ENCODE measurements at regions of chr20 and their contacts with region 1.

Region 1: DNA sequence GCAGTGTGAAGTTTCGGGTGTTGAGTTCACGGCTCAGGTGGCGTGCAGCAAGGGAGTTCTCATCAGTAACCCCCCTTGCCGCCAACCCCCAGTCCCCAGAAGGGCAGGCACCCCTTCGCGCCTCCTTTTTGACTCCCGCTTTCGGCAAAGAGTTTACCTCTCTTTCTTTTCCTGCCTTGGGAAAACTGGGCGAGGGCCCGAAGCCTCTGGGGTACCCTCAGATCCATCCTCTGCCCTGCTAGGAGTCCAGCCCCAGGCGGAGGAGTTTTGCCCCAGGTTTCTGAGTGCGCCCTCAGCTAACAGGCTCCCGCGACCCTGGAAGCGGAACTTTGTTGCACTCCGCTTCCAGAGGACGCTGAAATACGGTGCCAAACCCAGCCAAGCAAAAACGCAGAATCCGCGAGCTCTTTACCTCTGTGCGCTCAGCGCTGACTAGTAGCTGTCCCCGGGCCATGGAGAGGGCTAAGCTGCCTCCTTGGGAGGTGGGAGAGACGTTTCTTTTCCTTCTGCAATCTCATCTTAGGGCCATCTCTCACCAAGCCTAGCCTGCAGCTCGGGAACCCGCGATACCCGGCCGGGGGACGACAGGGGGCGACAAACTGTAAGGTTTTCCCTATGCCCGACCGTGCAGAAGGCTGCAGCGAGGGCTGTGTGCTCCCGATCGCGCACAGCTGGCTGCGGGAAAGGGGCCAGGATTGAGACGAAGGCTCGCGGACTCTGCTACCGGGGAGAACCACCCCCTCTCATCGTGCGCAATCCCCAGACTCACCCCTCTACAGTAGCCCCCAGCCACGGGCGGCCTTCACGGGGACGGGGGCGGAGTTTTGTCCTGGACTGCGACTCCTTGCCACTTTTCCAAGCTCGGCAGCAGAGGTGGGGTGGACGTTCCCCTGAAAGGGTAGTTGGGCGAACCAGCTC is 2.7 kb upstream of the PAX1 start:
- DNase-seq: no peak
- H3K4me3 Mint-ChIP-seq: no peak overlapping the region
- H3K27ac Mint-ChIP-seq: no peak overlapping the region
- H3K4me1 Mint-ChIP-seq: peaks cover 8% of the 10 kb centered on the region
- H3K27me3 Mint-ChIP-seq: peaks cover 81% of the 10 kb centered on the region

Region 2: GRCh38 chr20:21513881-21514540 is 188.8 kb before region 1 on chr20 and contains the start of gene NKX2-2:
- intact Hi-C with region 1: loop called (anchors 2 kb)
- DNase-seq: no peak
- H3K4me3 Mint-ChIP-seq: no peak within 1 kb of the TSS
- H3K27ac Mint-ChIP-seq: peak within 1 kb of the TSS; percentile 61
- H3K4me1 Mint-ChIP-seq: peaks cover 8% of the 10 kb centered on the region
- H3K27me3 Mint-ChIP-seq: peaks cover 69% of the 10 kb centered on the region
- total RNA-seq, gene NKX2-2: not detected in 2 replicates

Region 3: DNA sequence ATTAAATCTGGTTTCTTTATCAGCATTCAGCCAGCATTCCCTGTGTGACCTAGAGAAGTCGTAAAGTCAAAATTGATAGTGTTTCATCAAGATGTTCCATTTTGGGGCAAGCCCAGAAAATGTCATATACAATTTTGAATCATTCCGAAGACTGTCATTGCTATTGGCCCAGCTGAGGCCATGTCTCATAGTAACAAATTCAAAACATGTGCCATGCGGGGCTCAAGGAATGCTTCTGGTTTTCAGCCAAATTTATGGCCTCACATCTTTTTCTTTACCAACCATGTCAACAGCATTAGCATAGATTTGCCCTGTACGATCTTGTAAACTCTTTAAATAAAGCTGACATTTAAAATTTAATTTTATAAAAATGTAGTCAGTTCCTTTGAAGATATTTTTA is 317.4 kb after region 1 on chr20:
- intact Hi-C with region 1: no loop called
- DNase-seq: no peak
- H3K4me3 Mint-ChIP-seq: no peak overlapping the region
- H3K27ac Mint-ChIP-seq: no peak overlapping the region
- H3K4me1 Mint-ChIP-seq: no peaks in the 10 kb centered on the region
- H3K27me3 Mint-ChIP-seq: no peaks in the 10 kb centered on the region

Region 4: GRCh38 chr20:22567944-22568871 is 865.4 kb after region 1 on chr20:
- intact Hi-C with region 1: loop called (anchors 5 kb)
- DNase-seq: no peak
- H3K4me3 Mint-ChIP-seq: no peak overlapping the region
- H3K27ac Mint-ChIP-seq: no peak overlapping the region
- H3K4me1 Mint-ChIP-seq: no peaks in the 10 kb centered on the region
- H3K27me3 Mint-ChIP-seq: peaks cover 72% of the 10 kb centered on the region

Region 5: DNA sequence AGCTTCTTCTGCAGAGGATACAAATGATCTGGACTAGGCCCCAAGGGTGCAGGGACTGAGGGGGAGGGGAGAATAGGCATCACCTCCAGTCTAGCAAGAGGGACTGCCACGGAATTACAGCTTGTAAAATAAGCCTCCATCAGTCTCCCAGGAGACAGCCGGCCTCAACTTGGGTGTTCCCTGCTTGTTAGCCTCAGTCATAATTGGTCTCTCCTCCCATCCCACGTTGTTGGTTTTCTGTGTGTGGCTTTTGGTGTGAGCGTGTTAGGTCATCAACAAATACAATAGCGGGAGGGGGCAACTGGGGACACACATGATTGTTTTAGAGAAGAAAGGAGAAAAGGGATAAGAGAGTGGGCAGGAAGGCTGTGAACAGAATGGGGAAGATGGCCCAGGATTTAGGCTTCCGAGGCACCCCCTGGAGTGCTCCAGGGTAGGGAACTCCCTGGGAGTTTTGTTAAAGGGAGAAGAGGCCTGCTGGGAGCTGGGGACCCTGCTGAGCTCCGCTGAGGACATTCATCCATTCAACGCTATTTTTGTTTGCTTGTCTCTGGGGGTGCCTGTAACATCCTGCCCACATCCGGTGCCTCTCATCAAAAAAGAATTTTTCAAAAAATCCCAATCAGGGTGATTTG is 872.4 kb after region 1 on chr20:
- intact Hi-C with region 1: loop called (anchors 2 kb)
- DNase-seq: no peak
- H3K4me3 Mint-ChIP-seq: no peak overlapping the region
- H3K27ac Mint-ChIP-seq: no peak overlapping the region
- H3K4me1 Mint-ChIP-seq: no peaks in the 10 kb centered on the region
- H3K27me3 Mint-ChIP-seq: peaks cover 66% of the 10 kb centered on the region

Measured in activated T-helper 1 cell treated with anti-CD3 and anti-CD28 coated beads, Interleukin-12 subunit alpha, Interleukin-12 subunit beta, Interleukin-2, Interleukin-4 antibody, amounts not matched to agents 30 ng/mL and 10 ng/mL and 1 ng/mL, durations not matched to agents 14 hours and 24 hours and 36 hours (primary cell).